AG04450 (cell line): ENCODE measurements at regions of chr5 and their contacts with region 1.

Region 1: GRCh38 chr5:148730943-148731861 is 76.9 kb upstream of the HTR4 start:
- DNase-seq: peak; percentile 72
- H3K4me3 ChIP-seq: no peak overlapping the region; the same call in 1 of the 2 replicates
- H3K27ac ChIP-seq: no peak overlapping the region
- H3K27me3 ChIP-seq: peaks cover 3% of the 10 kb centered on the region
- CTCF ChIP-seq: peak; percentile 84

Region 2: DNA sequence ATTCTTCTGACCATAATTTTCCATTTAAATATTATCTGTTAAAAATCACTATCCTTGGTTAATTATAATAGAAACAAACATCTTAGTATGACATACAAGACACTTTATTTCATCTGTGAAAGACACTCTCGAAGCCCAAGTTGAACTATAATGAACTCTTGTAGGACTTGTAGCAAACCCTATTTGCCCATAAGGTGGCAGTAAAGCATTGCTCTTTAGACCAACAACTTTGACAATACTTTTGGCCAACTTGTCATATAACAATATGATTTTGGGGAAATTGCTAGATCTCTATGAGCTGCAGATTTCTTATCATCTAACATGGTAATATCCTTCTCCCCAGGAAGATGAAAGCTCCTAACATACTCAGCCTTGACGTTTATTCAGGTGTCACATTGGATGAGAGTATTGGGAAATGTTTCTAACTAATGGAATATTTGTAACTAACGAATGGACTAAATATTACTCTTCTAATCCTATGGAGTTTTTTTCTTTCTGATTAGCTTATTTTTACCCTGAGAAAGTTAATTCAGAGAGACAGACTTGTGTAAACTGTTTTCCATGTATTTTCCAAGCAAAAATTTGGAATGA is 551.9 kb before region 1 on chr5:
- CTCF ChIA-PET with region 1: interaction called, 117 read pairs
- POLR2A ChIA-PET with region 1: no interaction called
- DNase-seq: peak; percentile 32
- H3K4me3 ChIP-seq: no peak overlapping the region
- H3K27ac ChIP-seq: no peak overlapping the region
- H3K27me3 ChIP-seq: peaks cover 2% of the 10 kb centered on the region
- CTCF ChIP-seq: peak; percentile 70

Region 3: DNA sequence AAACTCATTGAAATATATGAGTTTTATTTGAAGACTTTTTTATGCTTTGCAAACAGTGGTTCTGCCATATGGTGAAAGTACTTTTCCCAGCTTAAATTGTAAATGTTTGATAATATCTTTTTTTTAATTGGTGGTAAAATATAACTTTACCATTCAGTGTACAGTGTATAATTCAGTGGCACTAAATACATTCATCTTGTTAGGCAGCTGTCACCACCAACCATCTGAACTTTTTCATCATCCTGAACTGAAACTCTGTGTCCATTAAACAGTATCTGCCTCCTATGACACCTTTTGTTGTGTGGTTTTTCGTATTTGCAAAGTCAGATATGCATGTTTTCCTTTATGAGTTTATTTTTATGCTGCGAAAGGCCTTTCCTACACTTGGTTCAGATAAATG is 302.4 kb before region 1 on chr5:
- CTCF ChIA-PET with region 1: interaction called, 14 read pairs
- POLR2A ChIA-PET with region 1: no interaction called
- DNase-seq: no peak
- H3K4me3 ChIP-seq: no peak overlapping the region
- H3K27ac ChIP-seq: no peak overlapping the region
- H3K27me3 ChIP-seq: no peaks in the 10 kb centered on the region
- CTCF ChIP-seq: no peak

Region 4: GRCh38 chr5:148719605-148720004 is 11.6 kb before region 1 on chr5:
- CTCF ChIA-PET with region 1: interaction called, 32 read pairs
- POLR2A ChIA-PET with region 1: no interaction called
- DNase-seq: no peak
- H3K4me3 ChIP-seq: no peak overlapping the region
- H3K27ac ChIP-seq: no peak overlapping the region
- H3K27me3 ChIP-seq: peaks cover 3% of the 10 kb centered on the region
- CTCF ChIP-seq: no peak

Region 5: DNA sequence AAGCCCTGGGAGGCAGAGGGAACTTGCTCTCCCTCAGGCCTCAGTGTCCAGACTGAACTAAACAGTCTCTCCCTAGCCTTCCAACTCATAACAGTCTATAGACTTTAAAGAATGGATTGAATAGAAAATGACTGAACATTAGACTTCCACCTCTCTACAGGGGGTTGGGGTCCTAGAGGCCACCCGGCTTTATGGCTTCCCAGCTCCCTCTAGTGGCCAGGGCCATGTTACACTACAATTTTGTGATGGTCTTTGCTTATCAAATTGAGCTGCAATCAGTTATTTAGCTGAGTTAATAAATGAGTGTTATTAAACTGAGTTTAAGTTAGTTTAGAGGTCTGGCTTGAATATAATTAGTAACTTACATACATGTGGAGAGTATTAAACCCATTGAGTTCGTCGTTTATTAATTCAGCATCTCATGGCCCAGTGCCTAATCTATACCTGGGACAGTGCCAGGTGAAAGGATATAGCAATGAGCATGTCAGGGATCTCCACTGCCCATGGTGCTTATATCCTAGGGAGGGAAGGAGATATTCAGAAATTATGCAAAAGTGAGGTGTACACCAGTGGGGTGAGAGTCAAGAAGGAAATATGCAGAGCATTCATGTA is 226.5 kb after region 1 on chr5:
- CTCF ChIA-PET with region 1: interaction called, 142 read pairs
- POLR2A ChIA-PET with region 1: no interaction called
- DNase-seq: no peak
- H3K4me3 ChIP-seq: no peak overlapping the region
- H3K27ac ChIP-seq: no peak overlapping the region
- H3K27me3 ChIP-seq: no peaks in the 10 kb centered on the region
- CTCF ChIP-seq: peak; percentile 90

Region 6: DNA sequence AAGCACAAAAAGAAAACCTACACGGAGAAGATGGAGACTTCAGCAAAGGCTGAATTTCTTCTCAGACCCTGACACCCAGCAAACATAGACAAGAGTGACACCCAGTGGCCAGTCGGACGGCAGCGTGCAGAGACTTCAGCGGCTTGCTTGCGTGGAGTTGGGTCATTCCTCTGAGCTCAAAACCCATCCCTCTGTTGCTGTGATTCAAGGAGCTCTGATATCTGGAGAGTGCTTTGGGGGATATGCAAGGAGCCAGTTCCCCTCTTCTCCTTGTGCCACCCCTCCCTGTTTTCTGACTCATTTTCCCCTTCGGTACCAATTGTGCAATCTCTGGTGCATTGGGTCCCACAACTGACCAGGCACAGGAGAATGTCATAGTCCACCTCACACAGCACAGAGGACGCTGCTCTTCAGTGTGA is 304.2 kb after region 1 on chr5:
- CTCF ChIA-PET with region 1: interaction called, 1,022 read pairs
- POLR2A ChIA-PET with region 1: no interaction called
- DNase-seq: peak; percentile 64
- H3K4me3 ChIP-seq: no peak overlapping the region
- H3K27ac ChIP-seq: no peak overlapping the region
- H3K27me3 ChIP-seq: no peaks in the 10 kb centered on the region
- CTCF ChIP-seq: peak; percentile 95